Prostate gland (tissue), 2 donors: ENCODE measurements at regions of chr22 and their contacts with region 1.

Region 1: DNA sequence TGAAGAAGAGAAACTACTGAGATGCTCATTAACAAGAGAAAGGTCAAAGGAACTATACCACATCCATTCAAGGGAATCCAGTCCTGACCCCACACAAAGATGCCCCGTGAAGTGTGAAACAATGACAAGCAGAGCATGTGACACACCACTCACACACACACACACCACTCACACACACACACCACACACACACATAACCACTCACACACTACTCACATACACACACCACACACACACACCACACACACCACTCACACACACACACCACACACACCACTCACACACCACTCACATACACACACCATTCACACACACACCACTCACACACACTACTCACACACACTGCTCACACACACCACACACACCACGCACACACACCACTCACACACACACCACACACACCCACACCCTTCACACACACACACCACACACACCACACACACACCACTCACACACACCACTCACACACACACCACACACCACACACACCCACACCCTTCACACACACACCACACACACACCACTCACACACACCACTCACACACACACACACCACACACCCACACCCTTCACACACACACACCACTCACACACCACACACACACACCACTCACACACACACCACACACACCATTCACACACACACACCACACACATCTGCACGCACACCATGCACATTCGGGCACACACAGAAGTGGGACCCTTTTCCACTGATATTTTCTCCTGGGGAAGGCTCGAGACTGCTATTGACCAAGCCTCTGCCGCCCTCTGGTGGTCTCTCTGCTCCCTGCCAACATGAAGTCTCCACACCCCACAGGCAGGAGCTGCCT is 32.0 kb upstream of the COMT start:
- DNase-seq: peak; percentile 86
- H3K4me3 ChIP-seq: no peak overlapping the region
- H3K27ac ChIP-seq: peak overlapping the region in 1 of 2 donors; percentile 23
- H3K4me1 ChIP-seq: peaks cover 20% of the 10 kb centered on the region
- H3K27me3 ChIP-seq: no peaks in the 10 kb centered on the region
- CTCF ChIP-seq: peak; percentile 83 to 96 (median 92)
- POLR2A ChIP-seq: no peak

Region 2: DNA sequence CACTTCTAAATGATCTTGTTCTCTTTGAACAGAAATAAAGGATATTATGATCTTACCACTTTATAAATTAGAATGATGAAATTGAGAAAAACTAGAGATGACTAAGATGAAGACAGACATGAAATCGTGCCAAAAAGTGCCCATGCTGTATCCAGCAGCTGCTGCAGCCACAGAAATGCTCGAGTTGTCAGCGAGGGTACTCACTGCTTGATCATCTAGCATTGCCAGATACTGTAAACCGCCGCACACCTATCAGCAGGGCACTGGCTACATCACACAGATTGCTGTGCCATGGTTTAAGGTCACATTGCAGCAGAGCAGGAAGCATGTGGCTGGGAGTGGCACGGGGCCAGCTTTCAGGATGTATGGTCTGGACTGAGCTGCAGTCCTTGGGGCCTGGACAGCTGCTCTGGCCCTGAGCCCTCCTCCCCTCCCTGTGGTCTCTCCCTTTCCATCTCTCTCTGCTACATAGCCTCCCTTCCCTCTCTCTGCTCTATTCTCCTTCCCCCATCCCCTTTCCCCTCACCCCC is 246.2 kb before region 1 on chr22:
- intact Hi-C with region 1: no loop called
- DNase-seq: no peak
- H3K4me3 ChIP-seq: no peak overlapping the region
- H3K27ac ChIP-seq: no peak overlapping the region
- H3K4me1 ChIP-seq: no peaks in the 10 kb centered on the region
- H3K27me3 ChIP-seq: no peaks in the 10 kb centered on the region
- CTCF ChIP-seq: no peak
- POLR2A ChIP-seq: no peak

Region 3: GRCh38 chr22:19730655-19731360 is 178.8 kb before region 1 on chr22:
- intact Hi-C with region 1: loop called (anchors 1 kb)
- DNase-seq: peak; percentile 79
- H3K4me3 ChIP-seq: peak overlapping the region; percentile 15 to 28
- H3K27ac ChIP-seq: no peak overlapping the region
- H3K4me1 ChIP-seq: no peaks in the 10 kb centered on the region
- H3K27me3 ChIP-seq: no peaks in the 10 kb centered on the region
- CTCF ChIP-seq: peak; percentile 88 to 98 (median 96)
- POLR2A ChIP-seq: no peak

Region 4: DNA sequence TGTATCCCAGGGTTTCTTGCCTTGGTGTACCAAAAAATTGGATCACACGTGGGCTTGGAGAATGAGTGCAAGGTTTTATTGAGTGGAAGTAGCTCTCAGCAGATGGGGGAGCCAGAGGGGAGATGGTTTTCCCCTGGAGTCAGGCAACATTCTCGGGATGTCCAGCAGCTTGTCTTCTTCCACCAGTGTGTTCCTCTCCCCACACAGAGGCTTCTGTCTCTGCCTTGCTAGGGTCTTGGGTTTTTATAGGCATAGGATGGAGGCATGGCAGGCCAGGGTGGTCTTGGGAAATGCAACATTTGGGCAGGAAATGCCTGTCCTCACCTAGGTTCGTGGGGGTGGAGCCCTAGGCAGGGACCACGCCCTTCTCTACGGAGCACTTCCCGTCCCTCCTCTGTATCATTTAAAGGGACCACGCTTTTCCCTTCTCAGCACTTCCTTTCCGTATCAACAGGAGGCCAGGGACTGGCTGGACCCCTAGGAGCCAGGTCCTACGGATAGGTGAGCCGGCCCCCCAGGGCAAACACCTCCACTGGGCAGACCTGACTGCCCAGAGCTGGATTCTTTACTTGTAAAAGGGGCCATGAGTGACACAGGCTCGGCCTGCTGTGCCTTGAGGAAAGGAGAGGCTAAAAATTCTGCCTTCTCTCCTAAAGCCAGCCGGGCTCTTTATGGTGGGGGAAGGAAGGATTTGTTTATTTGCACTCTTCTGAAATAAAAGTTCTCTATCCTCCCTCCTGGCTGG is 296.6 kb after region 1 on chr22:
- intact Hi-C with region 1: no loop called
- DNase-seq: peak; percentile 46
- H3K4me3 ChIP-seq: peak overlapping the region; percentile 23 to 39
- H3K27ac ChIP-seq: peak overlapping the region; percentile 48 to 52
- H3K4me1 ChIP-seq: no peaks in the 10 kb centered on the region
- H3K27me3 ChIP-seq: no peaks in the 10 kb centered on the region
- CTCF ChIP-seq: peak in 1 of 4 experiments; percentile 17
- POLR2A ChIP-seq: peak; percentile 53